HCT116 (cell line): ENCODE measurements at regions of chr1 and their contacts with region 1.

Region 1: DNA sequence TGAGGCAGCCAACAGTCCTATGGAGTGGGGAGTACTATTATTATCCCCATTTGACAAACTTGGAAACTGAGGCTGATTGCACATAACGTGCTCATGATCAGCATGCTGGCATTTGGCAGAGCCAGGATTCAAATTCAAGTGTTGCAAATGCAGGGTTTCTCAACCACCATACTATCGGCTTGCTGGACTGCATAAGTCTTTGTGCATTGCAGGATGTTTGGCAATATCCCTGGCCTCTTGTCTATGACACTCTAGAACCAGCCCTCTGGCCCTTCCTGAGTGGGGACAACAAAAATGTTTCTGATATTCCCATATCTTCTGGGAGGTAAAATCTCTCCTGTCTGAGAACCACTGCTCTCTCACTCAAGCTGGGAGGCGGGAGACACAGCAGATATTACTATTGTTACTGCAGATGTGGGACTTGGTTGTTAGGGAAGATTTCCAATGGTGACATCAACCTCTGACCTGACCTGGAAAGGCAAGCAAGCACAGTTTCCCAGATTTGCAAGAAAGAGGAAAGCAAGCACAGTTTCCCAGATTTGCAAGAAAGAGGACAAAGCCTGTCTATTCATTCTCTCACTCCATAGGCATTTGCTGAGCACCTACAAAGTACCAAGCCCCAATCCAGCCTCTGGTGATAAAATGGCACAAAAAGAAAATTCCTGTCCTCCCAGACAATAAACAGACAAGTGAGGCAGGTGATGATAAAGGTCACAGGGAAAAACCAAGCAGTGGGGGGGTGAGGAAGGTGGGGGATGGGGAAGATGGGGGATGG is 997 bp upstream of the AADACL3 start:
- DNase-seq: no peak
- ATAC-seq: no peak
- H3K4me3 ChIP-seq: no peak overlapping the region
- H3K27ac ChIP-seq: no peak overlapping the region
- H3K4me1 ChIP-seq: no peaks in the 10 kb centered on the region
- H3K27me3 ChIP-seq: no peaks in the 10 kb centered on the region
- CTCF ChIP-seq: no peak
- POLR2A ChIP-seq: no peak
- RAD21 ChIP-seq: no peak

Region 2: DNA sequence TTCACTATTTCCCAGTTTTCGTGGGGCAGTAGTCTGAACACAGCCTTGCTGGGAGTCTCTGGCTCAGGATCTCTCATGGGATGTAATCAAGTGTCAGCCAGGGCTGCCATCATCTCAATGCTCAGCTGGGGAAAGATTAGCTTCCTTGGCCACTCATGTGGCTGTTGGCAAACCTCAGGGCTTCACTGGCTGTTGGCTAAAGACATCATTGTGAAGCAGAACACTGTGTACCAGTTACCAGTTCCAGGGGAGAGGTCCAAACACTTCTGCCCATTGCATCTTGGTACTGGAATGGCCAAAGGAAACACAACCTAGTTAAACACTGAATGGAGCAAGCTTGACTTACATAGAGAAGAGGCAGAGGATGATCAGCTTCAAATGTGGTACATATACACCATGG is 37.3 kb before region 1 on chr1:
- CTCF ChIA-PET with region 1: no interaction called
- POLR2A ChIA-PET with region 1: no interaction called
- RAD21 ChIA-PET with region 1: no interaction called
- intact Hi-C with region 1: loop called (anchors 5 kb)
- DNase-seq: no peak
- ATAC-seq: no peak
- H3K4me3 ChIP-seq: no peak overlapping the region
- H3K27ac ChIP-seq: no peak overlapping the region
- H3K4me1 ChIP-seq: no peaks in the 10 kb centered on the region
- H3K27me3 ChIP-seq: peaks cover 7% of the 10 kb centered on the region; the same call in 1 of the 2 replicates
- CTCF ChIP-seq: no peak
- POLR2A ChIP-seq: no peak
- RAD21 ChIP-seq: no peak

Region 3: DNA sequence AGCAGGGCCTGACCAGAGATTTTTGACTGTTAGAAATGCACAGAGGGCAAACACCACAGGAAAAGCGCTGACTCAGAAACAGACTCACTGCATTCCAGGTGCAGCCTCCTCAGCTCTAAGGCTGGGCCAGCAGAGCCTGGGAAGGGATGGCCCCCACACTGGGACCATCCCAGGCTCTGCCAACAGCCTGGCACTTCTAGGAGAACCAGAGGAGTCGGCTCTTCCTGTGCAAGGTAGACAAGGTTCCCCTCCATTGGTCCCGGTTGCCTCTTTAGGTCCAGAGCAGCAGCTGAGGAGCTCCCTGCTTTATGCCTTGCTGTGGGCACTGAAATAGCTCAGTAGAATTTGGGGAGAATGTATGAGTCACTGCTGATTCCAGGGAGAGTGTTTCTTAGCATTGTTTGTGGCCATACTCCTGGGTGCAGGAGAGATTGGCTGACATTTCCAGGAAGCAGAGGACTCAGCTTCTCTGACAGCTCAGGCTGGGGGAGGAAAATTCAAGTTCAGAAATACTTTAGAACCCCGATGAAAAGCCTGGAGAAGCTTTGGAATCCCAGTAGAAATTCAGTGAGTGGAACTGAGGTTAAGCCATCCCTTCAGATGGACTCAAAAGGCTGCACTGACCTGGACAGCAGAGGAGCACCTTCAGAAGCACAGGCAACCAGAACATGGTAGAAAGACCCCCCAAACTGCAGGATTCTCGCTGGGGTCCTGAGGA is 95.9 kb after region 1 on chr1:
- CTCF ChIA-PET with region 1: no interaction called
- POLR2A ChIA-PET with region 1: no interaction called
- RAD21 ChIA-PET with region 1: no interaction called
- intact Hi-C with region 1: no loop called
- DNase-seq: no peak
- ATAC-seq: peak; percentile 47
- H3K4me3 ChIP-seq: no peak overlapping the region
- H3K27ac ChIP-seq: no peak overlapping the region
- H3K4me1 ChIP-seq: no peaks in the 10 kb centered on the region
- H3K27me3 ChIP-seq: 0 out of 2 replicates have a peak, but pooled peaks cover 7% of the 10 kb centered on the region
- CTCF ChIP-seq: no peak
- POLR2A ChIP-seq: no peak
- RAD21 ChIP-seq: no peak